ENCODE measurements at regions of chr10 and their contacts with region 1.

Region 1: GRCh38 chr10:21078410-21079329 is 181.6 kb upstream of the NEBL start:
- DNase-seq: peak; percentile 54 to 68
- H3K4me3 ChIP-seq: no peak overlapping the region
- H3K27ac ChIP-seq: no peak overlapping the region
- H3K4me1 ChIP-seq: peaks cover 9% of the 10 kb centered on the region
- H3K27me3 ChIP-seq: no peaks in the 10 kb centered on the region
- CTCF ChIP-seq: peak; percentile 81

Region 2: DNA sequence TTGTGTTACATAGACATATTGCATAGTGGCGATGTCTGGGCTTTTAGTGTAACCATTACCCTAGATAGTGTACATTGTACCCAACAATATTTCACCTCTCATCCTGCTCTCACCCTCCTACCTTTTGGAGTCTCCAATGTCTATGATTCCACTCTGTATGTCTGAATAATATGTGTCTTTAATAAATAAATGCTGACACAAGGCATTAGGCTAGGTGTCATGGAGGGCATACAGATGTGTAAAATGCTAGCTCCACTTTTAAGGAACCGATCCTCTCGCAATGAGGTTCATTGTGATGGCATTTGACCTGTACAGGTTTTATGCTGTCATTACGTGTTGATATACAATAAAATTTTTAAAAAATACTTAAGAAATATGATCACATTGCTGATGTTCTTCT is 255.8 kb before region 1 on chr10:
- CTCF ChIA-PET with region 1: no interaction called
- POLR2A ChIA-PET with region 1: no interaction called
- intact Hi-C with region 1: no loop called
- DNase-seq: no peak
- H3K4me3 ChIP-seq: no peak overlapping the region
- H3K27ac ChIP-seq: no peak overlapping the region
- H3K4me1 ChIP-seq: 0 out of 2 replicates have a peak, but pooled peaks cover under 1% of the 10 kb centered on the region
- H3K27me3 ChIP-seq: no peaks in the 10 kb centered on the region
- CTCF ChIP-seq: no peak

Region 3: GRCh38 chr10:20847512-20847911 is 231.2 kb before region 1 on chr10:
- CTCF ChIA-PET with region 1: no interaction called
- POLR2A ChIA-PET with region 1: no interaction called
- intact Hi-C with region 1: no loop called
- DNase-seq: no peak
- H3K4me3 ChIP-seq: no peak overlapping the region
- H3K27ac ChIP-seq: no peak overlapping the region
- H3K4me1 ChIP-seq: no peaks in the 10 kb centered on the region
- H3K27me3 ChIP-seq: no peaks in the 10 kb centered on the region
- CTCF ChIP-seq: no peak

Region 4: DNA sequence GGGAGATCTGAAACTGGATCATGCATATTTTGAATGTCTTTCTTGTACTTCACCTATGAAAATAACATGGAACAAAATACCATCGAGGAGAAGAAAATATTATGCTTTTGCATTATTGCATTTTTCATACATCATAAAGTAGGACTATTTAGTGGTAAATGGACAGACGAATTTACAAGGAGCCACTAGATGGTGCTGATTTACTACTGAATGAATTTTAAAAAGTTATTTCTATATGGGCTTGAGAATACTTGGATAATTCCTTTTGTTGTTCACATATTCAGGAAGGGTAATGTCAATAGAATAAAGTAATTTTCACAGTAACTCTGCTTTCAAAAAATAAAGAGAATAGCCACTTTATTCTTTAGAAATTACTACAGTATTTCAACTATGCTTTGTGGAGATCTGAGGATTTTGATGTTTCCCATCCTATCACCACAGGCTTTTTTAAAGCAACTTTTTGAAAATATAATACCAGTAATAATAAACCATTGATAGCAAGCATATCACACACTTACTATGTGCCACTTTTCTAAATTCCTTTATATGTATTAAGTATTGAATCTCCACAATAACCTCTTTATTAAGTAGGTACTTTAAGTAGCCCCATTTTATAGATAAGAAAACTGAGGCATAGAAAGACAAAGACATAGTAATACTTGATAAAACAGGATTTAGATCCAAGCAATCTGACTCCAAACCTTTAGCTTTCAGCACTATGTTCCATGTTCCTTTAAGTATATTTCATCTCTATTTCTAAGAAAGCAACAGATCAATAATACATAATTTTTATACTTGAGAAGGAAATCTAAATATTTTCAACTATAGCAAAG is 220.2 kb before region 1 on chr10:
- CTCF ChIA-PET with region 1: no interaction called
- POLR2A ChIA-PET with region 1: no interaction called
- intact Hi-C with region 1: loop called (anchors 5 kb)
- DNase-seq: peak in 1 of 2 experiments; percentile 55
- H3K4me3 ChIP-seq: no peak overlapping the region
- H3K27ac ChIP-seq: no peak overlapping the region
- H3K4me1 ChIP-seq: no peaks in the 10 kb centered on the region
- H3K27me3 ChIP-seq: no peaks in the 10 kb centered on the region
- CTCF ChIP-seq: peak; percentile 73

Region 5: GRCh38 chr10:21184216-21184615 is 105.5 kb after region 1 on chr10:
- CTCF ChIA-PET with region 1: interaction called, 15 read pairs
- POLR2A ChIA-PET with region 1: no interaction called
- intact Hi-C with region 1: no loop called
- DNase-seq: peak in 1 of 2 experiments; percentile 64
- H3K4me3 ChIP-seq: no peak overlapping the region
- H3K27ac ChIP-seq: no peak overlapping the region
- H3K4me1 ChIP-seq: peaks cover 15% of the 10 kb centered on the region; the same call in 1 of the 2 replicates
- H3K27me3 ChIP-seq: no peaks in the 10 kb centered on the region
- CTCF ChIP-seq: no peak

Region 6: DNA sequence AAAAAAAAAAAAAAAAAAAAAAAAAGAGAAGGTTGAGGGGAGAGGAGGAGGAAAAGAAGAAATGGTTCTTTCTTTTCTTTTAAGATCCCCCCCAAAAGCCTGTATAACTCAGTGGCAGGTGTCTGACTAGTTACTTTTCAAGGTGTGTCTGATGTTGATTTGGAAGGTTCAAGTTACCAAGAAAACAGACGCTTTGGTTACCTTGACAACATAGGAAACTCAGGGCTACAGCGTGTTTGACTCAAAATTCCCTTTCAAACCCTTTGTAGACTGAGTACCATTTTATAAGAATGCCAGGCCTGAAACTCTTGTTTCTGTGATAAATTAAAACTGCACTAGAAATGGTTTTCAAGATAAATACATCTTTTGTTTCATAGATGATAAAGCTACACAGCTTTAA is 160.0 kb after region 1 on chr10:
- CTCF ChIA-PET with region 1: interaction called, 11 read pairs
- POLR2A ChIA-PET with region 1: no interaction called
- intact Hi-C with region 1: no loop called
- DNase-seq: no peak
- H3K4me3 ChIP-seq: no peak overlapping the region
- H3K27ac ChIP-seq: peak overlapping the region; percentile 78
- H3K4me1 ChIP-seq: peaks cover 25% of the 10 kb centered on the region
- H3K27me3 ChIP-seq: no peaks in the 10 kb centered on the region
- CTCF ChIP-seq: no peak

Region 7: DNA sequence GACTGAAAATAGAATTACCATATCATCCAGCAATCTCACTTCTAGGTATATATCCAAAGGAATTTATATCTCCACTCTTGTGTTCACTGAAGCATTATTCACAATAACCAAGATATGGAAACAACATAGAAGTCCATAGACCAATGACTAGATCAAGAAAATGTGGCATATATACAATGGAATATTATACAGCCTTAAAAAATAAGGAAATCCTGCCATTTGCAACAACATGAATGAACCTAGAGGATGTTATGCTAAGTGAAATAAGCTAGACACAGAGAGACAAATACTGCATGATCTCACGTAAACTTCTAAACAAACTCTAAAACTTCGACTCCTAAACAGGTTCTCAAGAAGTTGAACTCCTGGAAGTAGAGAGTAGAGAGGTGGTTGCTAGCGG is 192.3 kb after region 1 on chr10:
- CTCF ChIA-PET with region 1: no interaction called
- POLR2A ChIA-PET with region 1: no interaction called
- intact Hi-C with region 1: loop called (anchors 1 kb)
- DNase-seq: no peak
- H3K4me3 ChIP-seq: no peak overlapping the region
- H3K27ac ChIP-seq: no peak overlapping the region
- H3K4me1 ChIP-seq: peaks cover 22% of the 10 kb centered on the region
- H3K27me3 ChIP-seq: no peaks in the 10 kb centered on the region
- CTCF ChIP-seq: no peak

Measured in PC-9 (cell line).